PC-9 (cell line): ENCODE measurements at regions of chr10 and their contacts with region 1.

Region 1: DNA sequence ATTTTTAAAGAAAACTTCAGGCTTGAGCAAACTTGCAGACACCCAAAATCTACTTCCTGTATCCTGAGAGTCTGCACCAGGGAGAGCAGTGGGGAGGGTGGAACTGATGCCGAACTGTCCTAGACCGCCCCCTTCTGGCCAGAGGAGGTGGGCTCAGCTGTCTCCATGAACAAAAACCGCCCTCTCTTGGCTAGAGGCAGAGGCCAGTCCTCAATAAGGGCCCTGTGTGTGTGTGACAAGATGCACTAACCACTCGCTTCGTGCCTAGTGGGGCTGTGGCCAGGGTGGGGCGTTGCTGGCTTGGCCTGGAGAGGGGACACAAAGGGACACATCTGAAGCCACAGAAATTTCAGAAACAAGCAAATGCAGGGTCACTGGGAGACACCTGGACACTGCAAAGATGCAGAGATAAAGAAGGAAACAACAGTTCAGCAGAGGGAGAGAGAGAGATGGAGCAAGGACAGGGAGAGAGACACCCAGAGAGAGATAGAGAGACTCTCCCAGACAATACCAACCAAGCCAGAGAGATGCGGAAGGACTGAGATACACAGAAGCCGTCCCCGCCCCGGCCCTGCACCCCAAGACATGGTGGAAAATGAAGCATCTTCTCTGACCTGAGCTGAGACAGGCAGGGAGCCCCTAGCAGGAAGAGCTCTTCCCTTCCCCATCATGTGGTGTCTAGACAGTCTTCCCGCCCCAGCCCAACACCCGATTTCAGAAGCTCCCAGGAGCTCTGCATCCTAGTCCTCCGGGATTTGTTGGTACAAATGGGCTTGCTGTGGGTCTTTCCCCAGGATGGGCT is 22.7 kb upstream of the FXYD4 start:
- DNase-seq: peak; percentile 64 to 85
- H3K4me3 ChIP-seq: no peak overlapping the region
- H3K27ac ChIP-seq: no peak overlapping the region
- H3K4me1 ChIP-seq: peaks cover 39% of the 10 kb centered on the region
- H3K27me3 ChIP-seq: no peaks in the 10 kb centered on the region
- CTCF ChIP-seq: peak; percentile 96

Region 2: DNA sequence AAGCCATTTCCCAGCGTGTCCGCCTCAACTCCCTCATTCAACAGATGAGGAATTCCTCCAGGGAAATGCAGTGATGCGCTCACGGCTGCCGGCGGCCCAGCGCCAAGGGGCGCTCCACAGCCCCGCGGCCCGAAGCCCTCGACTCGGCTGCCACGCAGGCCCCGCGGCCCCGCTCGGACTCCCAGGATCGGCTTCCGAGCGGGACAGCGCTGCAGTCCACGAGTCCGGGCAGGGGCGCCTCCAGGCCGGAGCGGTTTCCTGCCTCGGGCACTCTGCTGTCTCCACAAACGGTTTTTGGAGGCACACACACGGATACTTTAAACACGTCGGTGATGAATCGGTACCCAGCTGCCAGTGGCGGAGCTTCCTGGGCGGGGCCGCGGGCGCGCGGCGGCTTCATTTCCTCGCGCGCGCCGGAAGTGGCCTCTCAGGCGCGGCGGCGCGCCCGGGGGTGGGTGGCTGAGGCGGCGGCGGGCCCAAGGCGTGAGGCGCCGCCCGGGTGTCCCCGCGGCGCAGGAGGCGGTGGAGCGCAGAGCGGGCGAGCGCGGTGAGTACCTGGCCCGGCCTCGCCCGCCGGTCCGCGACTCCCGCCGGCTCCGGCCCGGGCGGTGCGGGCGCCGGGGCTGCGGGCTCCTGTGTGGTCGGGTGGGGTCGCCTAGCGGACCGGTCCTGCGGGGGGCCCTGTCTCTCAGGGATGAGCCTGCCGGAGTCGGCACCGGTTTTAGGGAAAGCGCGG is 210.5 kb before region 1 on chr10 and contains the start of gene CSGALNACT2:
- CTCF ChIA-PET with region 1: no interaction called
- POLR2A ChIA-PET with region 1: no interaction called
- intact Hi-C with region 1: loop called (anchors 2 kb)
- DNase-seq: peak; percentile 64 to 85
- H3K4me3 ChIP-seq: peak within 1 kb of the TSS; percentile 99
- H3K27ac ChIP-seq: 0 out of 2 replicates have a peak within 1 kb of the TSS, but pooled peaks have one; percentile 7
- H3K4me1 ChIP-seq: peaks cover 28% of the 10 kb centered on the region
- H3K27me3 ChIP-seq: no peaks in the 10 kb centered on the region
- CTCF ChIP-seq: no peak
- total RNA-seq, gene CSGALNACT2: 7.2 and 8.5 TPM in 2 replicates

Region 3: DNA sequence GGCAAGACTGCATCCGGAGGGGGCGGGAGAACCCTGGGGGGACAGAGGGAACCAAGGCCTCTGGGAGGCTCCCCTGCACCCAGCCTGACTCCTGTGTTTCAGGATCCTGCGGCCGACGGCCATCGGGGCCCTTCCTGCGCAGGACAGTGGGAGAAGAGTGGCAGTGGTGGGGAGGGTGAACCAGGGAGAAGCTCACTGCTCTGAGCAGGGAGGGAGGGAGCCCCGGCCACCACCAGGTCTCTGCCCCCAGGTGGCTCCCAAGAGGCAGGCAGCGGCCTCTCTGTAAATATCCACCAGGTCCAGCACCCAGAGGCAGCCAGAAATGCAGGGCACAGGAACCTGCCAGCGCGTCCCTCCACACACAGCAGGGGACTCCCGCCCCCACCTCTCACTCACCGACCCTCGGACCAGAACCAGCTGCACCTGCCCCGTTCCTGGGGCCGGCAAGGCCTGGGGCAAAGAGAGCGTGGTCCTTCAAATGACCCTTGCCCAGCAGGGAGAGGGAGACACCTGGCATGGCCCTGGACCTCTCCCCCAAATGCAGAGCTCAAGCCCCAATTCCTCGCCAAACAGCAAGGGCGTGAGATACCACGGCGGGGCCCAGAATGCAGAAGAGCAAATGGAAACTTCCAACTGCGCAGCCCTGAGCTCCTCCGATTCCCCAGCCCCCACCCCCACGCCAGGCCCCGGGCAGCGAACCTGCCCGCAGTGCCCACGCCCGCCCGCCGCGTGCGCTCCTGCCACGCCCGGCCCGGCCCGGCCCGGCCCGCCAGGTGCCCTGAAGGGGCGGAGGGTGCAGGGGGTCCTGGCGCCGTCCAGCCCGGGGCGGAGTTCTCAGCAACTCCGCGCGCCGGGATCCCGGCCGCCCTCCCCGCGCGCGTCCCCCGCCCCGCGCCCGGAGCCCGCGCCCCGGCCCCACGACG is 82.7 kb before region 1 on chr10:
- CTCF ChIA-PET with region 1: no interaction called
- POLR2A ChIA-PET with region 1: no interaction called
- intact Hi-C with region 1: loop called (anchors 1 kb)
- DNase-seq: peak; percentile 48 to 66
- H3K4me3 ChIP-seq: peak overlapping the region; percentile 30; the same call in 1 of the 2 replicates
- H3K27ac ChIP-seq: no peak overlapping the region
- H3K4me1 ChIP-seq: no peaks in the 10 kb centered on the region
- H3K27me3 ChIP-seq: peaks cover 76% of the 10 kb centered on the region
- CTCF ChIP-seq: peak; percentile 71

Region 4: GRCh38 chr10:43292755-43293676 is 55.7 kb before region 1 on chr10:
- CTCF ChIA-PET with region 1: interaction called, 3 read pairs
- POLR2A ChIA-PET with region 1: interaction called, 8 read pairs
- intact Hi-C with region 1: loop called (anchors 1 kb)
- DNase-seq: peak in 1 of 2 experiments; percentile 56
- H3K4me3 ChIP-seq: no peak overlapping the region
- H3K27ac ChIP-seq: no peak overlapping the region
- H3K4me1 ChIP-seq: peaks cover 9% of the 10 kb centered on the region
- H3K27me3 ChIP-seq: no peaks in the 10 kb centered on the region
- CTCF ChIP-seq: peak; percentile 78

Region 5: GRCh38 chr10:43436400-43437140 is 87.9 kb after region 1 on chr10 and contains the start of gene ZNF487:
- CTCF ChIA-PET with region 1: no interaction called
- POLR2A ChIA-PET with region 1: no interaction called
- intact Hi-C with region 1: loop called (anchors 5 kb)
- DNase-seq: peak; percentile 83 to 97
- H3K4me3 ChIP-seq: peak within 1 kb of the TSS; percentile 98
- H3K27ac ChIP-seq: peak within 1 kb of the TSS; percentile 88
- H3K4me1 ChIP-seq: 0 out of 2 replicates have a peak, but pooled peaks cover 4% of the 10 kb centered on the region
- H3K27me3 ChIP-seq: no peaks in the 10 kb centered on the region
- CTCF ChIP-seq: no peak
- total RNA-seq, gene ZNF487: 11.8 and 14.5 TPM in 2 replicates